Esophagus squamous epithelium (tissue), 5 donors: ENCODE measurements at regions of chrX and their contacts with region 1.

Region 1: DNA sequence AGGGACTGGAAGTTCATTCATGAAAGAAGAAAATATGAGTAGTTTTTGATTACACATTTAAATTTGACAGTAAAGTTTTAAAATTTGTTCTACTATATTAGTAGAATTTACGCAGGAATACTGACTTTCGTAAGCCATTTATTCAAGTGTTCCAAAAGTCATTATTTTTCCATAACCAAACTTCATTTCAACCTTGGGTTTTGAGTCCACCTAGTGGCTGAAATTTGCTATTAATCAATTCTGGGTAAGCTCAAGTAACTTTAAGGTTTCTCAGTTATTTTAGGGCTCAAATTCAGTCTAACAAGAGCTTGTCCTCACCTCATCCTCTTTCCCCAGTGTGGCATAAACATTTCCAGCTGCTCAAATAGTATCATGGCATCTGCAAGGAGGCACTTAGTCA is 175.4 kb downstream of the SH3BGRL start:
- DNase-seq: no peak
- H3K4me3 ChIP-seq: no peak overlapping the region
- H3K27ac ChIP-seq: no peak overlapping the region
- H3K4me1 ChIP-seq: no peaks in the 10 kb centered on the region
- H3K27me3 ChIP-seq: no peaks in the 10 kb centered on the region
- CTCF ChIP-seq: peak; percentile 27 to 57 (median 46)
- POLR2A ChIP-seq: no peak

Region 2: DNA sequence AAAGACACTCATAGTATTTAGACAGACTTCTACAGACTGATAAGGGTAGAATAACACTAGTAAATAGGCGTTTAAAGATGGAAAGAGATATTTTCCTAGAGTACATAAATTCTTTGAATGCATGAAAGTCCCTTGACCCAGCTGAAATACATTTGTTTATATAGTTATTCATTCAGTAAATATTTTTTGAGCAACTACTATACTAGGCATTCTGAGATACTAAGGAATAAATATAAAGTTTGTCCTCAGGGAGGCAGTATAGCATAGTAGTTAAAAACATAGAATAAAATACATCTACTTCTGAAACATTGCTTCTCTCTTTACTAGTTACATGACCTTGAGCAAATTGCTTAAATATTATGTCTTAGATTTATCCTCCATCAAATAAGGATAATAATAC is 203.0 kb before region 1 on chrX:
- intact Hi-C with region 1: loop called (anchors 10 kb)
- DNase-seq: no peak
- H3K4me3 ChIP-seq: no peak overlapping the region
- H3K27ac ChIP-seq: no peak overlapping the region
- H3K4me1 ChIP-seq: no peaks in the 10 kb centered on the region
- H3K27me3 ChIP-seq: no peaks in the 10 kb centered on the region
- CTCF ChIP-seq: peak in 2 of 6 experiments; percentile 34 to 43
- POLR2A ChIP-seq: no peak

Region 3: GRCh38 chrX:81316163-81316562 is 61.2 kb before region 1 on chrX:
- intact Hi-C with region 1: no loop called
- DNase-seq: no peak
- H3K4me3 ChIP-seq: no peak overlapping the region
- H3K27ac ChIP-seq: no peak overlapping the region
- H3K4me1 ChIP-seq: peaks cover 0 to 9% (median 0%) of the 10 kb centered on the region in 3 donors
- H3K27me3 ChIP-seq: no peaks in the 10 kb centered on the region
- CTCF ChIP-seq: no peak
- POLR2A ChIP-seq: no peak

Region 4: DNA sequence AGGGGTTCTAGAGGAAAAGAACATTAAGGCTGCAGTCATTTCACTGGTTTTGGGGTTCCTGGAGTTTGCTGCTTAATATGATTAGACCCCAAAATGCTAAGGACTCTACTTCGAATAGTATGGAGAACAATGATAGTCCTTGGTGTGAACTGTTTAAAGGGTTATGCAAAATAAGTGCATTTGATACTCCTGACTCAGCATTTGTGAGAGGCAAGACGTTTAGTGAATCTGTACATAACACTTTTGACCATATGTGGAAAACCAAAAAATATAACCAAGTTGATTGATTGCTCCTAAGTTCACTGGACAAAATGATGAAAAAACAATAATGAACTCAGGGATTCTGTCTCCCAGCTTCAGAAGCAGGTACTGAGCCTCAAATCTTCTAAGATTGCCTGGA is 238.7 kb after region 1 on chrX:
- intact Hi-C with region 1: no loop called
- DNase-seq: no peak
- H3K4me3 ChIP-seq: no peak overlapping the region
- H3K27ac ChIP-seq: no peak overlapping the region
- H3K4me1 ChIP-seq: no peaks in the 10 kb centered on the region
- H3K27me3 ChIP-seq: no peaks in the 10 kb centered on the region
- CTCF ChIP-seq: no peak
- POLR2A ChIP-seq: no peak

Region 5: GRCh38 chrX:81779701-81780100 is 402.4 kb after region 1 on chrX:
- intact Hi-C with region 1: no loop called
- DNase-seq: no peak
- H3K4me3 ChIP-seq: no peak overlapping the region
- H3K27ac ChIP-seq: no peak overlapping the region
- H3K4me1 ChIP-seq: no peaks in the 10 kb centered on the region
- H3K27me3 ChIP-seq: no peaks in the 10 kb centered on the region
- CTCF ChIP-seq: no peak
- POLR2A ChIP-seq: no peak